ENCODE measurements at regions of chr5 and their contacts with region 1.

Region 1: GRCh38 chr5:126814721-126815404 is 37.9 kb downstream of the LMNB1 start:
- DNase-seq: peak; percentile 46
- H3K4me3 Mint-ChIP-seq: no peak overlapping the region
- H3K27ac Mint-ChIP-seq: peak overlapping the region; percentile 61
- H3K4me1 Mint-ChIP-seq: peaks cover 5% of the 10 kb centered on the region
- H3K27me3 Mint-ChIP-seq: no peaks in the 10 kb centered on the region
- CTCF ChIP-seq: no peak

Region 2: DNA sequence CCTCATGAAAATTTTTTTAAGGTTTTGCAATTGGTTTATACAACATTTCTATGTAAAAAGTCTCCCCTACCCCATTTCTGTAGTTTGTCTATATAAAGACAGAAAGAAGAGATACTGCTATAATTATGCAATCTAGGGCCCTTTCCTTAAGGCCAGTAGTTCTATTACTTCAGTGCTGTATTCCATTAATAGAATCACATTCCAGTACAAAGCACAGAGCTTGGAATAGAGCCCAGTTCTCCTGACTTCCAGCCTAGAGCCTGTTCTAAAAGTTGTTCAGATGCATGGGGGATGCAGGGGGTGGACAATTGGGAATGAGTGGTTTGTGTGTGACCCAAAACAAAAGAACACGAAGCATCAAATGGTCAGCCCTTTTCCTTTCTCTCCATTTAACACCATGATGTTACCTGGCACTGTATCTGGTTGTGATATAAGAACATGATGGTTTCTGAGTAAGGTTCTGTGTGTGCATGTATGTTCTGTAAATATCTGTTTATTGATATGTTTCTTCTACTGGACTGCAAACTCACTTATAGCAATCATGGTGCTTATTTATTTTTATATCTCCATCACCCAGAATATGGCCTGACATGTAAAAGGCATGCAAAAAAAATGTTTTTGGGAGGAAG is 399.9 kb before region 1 on chr5:
- CTCF ChIA-PET with region 1: no interaction called
- POLR2A ChIA-PET with region 1: no interaction called
- intact Hi-C with region 1: no loop called
- DNase-seq: peak; percentile 72
- H3K4me3 Mint-ChIP-seq: no peak overlapping the region
- H3K27ac Mint-ChIP-seq: no peak overlapping the region
- H3K4me1 Mint-ChIP-seq: peaks cover 9% of the 10 kb centered on the region
- H3K27me3 Mint-ChIP-seq: no peaks in the 10 kb centered on the region
- CTCF ChIP-seq: no peak

Region 3: DNA sequence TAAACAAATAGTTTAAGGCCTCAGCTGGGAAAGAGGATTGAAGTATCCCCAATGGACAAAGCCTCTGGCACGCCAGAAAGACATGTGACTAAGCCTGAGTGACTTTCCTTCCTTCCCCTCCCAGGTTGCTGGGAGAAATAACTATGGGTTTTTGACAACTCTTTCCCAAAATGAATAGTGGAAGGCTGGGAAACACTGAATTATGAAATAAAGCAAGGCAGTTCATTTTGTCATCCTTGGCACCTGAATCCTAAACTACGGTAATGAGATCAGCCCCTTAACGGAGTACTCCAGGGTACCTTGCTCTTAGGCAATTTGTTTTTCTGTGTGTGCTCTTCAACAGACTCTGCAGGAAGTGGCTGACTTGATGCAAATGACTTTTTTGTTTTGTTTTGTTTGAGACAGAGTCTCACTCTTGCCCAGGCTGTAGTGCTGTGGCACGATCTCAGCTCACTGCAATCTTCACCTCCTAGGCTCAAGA is 37.3 kb after region 1 on chr5:
- CTCF ChIA-PET with region 1: no interaction called
- POLR2A ChIA-PET with region 1: no interaction called
- intact Hi-C with region 1: loop called (anchors 1 kb)
- DNase-seq: peak; percentile 15
- H3K4me3 Mint-ChIP-seq: no peak overlapping the region
- H3K27ac Mint-ChIP-seq: no peak overlapping the region
- H3K4me1 Mint-ChIP-seq: no peaks in the 10 kb centered on the region
- H3K27me3 Mint-ChIP-seq: no peaks in the 10 kb centered on the region
- CTCF ChIP-seq: no peak